Activated CD4-positive, alpha-beta memory T cell treated with anti-CD3 and anti-CD28 coated beads for 36 hours (primary cell): ENCODE measurements at regions of chr5 and their contacts with region 1.

Region 1: DNA sequence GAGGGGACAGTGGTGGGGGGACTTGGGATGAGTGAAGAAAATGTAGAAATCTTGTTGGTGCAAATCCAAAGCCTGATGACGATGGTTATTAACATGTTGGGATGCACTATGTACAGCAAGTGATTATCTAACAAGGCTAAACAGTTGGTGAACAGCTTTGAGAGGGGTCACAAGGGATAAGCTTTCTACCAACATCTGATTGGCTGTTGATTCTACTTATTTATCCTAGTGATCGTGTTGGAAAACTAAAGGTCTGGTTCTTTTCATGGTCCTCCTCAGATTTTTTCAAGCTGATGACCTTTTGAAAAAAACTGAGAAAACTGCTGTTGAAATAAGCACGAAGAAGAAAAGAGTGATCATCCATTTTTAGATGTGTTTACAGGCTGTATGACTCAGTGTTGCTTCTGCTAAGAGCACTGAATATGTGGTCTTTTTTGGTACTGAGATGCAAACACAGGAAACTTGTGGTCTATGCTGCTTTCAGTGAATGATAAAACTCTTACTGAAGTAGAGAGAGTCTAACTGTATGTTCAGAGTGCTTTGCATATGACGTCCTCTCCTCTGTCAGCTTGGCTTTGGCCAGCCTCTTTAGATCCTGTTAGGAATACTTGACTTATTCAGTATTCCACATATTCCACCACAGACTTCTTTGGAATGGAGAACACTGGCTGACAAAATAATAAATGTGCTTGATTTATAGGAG is 174.8 kb downstream of the SLF1 start:
- DNase-seq: peak; percentile 25
- H3K4me3 Mint-ChIP-seq: peak overlapping the region; percentile 39
- H3K27ac Mint-ChIP-seq: peak overlapping the region; percentile 84
- H3K4me1 Mint-ChIP-seq: peaks cover 35% of the 10 kb centered on the region
- H3K27me3 Mint-ChIP-seq: peaks cover 2% of the 10 kb centered on the region

Region 2: GRCh38 chr5:94111209-94112004 is 681.9 kb before region 1 on chr5:
- CTCF ChIA-PET with region 1: no interaction called
- POLR2A ChIA-PET with region 1: no interaction called
- intact Hi-C with region 1: loop called (anchors 1 kb)
- DNase-seq: peak; percentile 96
- H3K4me3 Mint-ChIP-seq: peak overlapping the region; percentile 92
- H3K27ac Mint-ChIP-seq: peak overlapping the region; percentile 85
- H3K4me1 Mint-ChIP-seq: peaks cover 26% of the 10 kb centered on the region
- H3K27me3 Mint-ChIP-seq: no peaks in the 10 kb centered on the region

Region 3: GRCh38 chr5:94618493-94619328 is 174.6 kb before region 1 on chr5 and contains the starts of genes KIAA0825 and SLF1:
- CTCF ChIA-PET with region 1: no interaction called
- POLR2A ChIA-PET with region 1: no interaction called
- intact Hi-C with region 1: loop called (anchors 1 kb)
- DNase-seq: peak; percentile 94
- H3K4me3 Mint-ChIP-seq: peak within 1 kb of the TSS; percentile 94
- H3K27ac Mint-ChIP-seq: peak within 1 kb of the TSS; percentile 94
- H3K4me1 Mint-ChIP-seq: peaks cover 38% of the 10 kb centered on the region
- H3K27me3 Mint-ChIP-seq: no peaks in the 10 kb centered on the region
- total RNA-seq, gene KIAA0825: 0.68 to 0.69 TPM
- total RNA-seq, gene SLF1: 14.5 to 15.9 TPM

Region 4: GRCh38 chr5:94745786-94746730 is 47.2 kb before region 1 on chr5:
- CTCF ChIA-PET with region 1: no interaction called
- POLR2A ChIA-PET with region 1: no interaction called
- intact Hi-C with region 1: loop called (anchors 1 kb)
- DNase-seq: no peak
- H3K4me3 Mint-ChIP-seq: no peak overlapping the region
- H3K27ac Mint-ChIP-seq: no peak overlapping the region
- H3K4me1 Mint-ChIP-seq: peaks cover 15% of the 10 kb centered on the region
- H3K27me3 Mint-ChIP-seq: no peaks in the 10 kb centered on the region

Region 5: DNA sequence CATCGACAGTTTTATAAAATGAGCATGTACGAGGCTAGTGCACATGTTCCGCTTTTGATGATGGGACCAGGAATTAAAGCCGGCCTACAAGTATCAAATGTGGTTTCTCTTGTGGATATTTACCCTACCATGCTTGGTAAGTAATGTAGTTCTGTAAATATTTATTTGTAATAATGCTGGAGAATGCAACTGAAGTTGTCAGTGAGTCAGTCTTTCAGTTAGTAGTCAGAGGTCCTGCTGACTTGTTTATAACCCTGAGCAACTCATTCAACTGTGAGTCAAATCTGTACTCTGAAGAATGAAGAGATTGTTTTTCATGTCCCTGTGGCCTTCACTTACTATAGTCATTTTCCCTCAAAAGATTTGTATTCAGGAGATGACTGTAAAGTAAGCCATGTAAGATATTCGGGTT is 798.2 kb after region 1 on chr5:
- CTCF ChIA-PET with region 1: no interaction called
- POLR2A ChIA-PET with region 1: no interaction called
- intact Hi-C with region 1: loop called (anchors 1 kb)
- DNase-seq: no peak
- H3K4me3 Mint-ChIP-seq: no peak overlapping the region
- H3K27ac Mint-ChIP-seq: no peak overlapping the region
- H3K4me1 Mint-ChIP-seq: peaks cover 30% of the 10 kb centered on the region
- H3K27me3 Mint-ChIP-seq: no peaks in the 10 kb centered on the region